Endothelial cell of umbilical vein (primary cell): ENCODE measurements at regions of chr2 and their contacts with region 1.

Region 1: DNA sequence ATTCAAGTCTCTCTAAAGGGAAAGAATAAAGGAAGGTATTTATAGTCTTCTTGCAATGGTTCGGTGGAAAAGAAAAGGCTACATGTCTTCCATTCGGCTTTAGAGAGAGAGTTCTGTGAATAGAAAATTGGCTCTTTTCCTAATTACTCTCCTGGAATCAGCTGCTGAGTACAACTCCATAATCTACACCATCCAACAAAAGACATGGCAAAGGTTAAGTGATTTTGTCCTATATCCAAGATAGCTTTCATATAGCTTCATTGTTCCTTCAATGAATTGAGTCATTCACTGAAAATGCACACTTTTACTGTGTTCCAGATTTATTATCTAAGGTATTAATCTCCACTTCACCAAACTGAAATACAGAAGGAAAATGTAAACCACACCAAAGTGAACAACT is 514.5 kb downstream of the LRRTM4 start:
- DNase-seq: peak; percentile 44
- H3K4me3 ChIP-seq: no peak overlapping the region
- H3K27ac ChIP-seq: no peak overlapping the region
- H3K4me1 ChIP-seq: peaks cover 20% of the 10 kb centered on the region
- H3K27me3 ChIP-seq: no peaks in the 10 kb centered on the region
- CTCF ChIP-seq: no peak
- POLR2A ChIP-seq: no peak

Region 2: GRCh38 chr2:76985387-76986136 is 22.1 kb before region 1 on chr2:
- CTCF ChIA-PET with region 1: no interaction called
- POLR2A ChIA-PET with region 1: no interaction called
- dilution Hi-C with region 1: no loop called
- intact Hi-C with region 1: loop called (anchors 1 kb)
- DNase-seq: peak; percentile 49
- H3K4me3 ChIP-seq: peak overlapping the region in 1 of 3 experiments; percentile 17
- H3K27ac ChIP-seq: peak overlapping the region; percentile 81
- H3K4me1 ChIP-seq: peaks cover 18% of the 10 kb centered on the region
- H3K27me3 ChIP-seq: no peaks in the 10 kb centered on the region
- CTCF ChIP-seq: no peak
- POLR2A ChIP-seq: no peak